ENCODE measurements at regions of chr15 and their contacts with region 1.

Region 1: GRCh38 chr15:62847900-62848489 is 194.6 kb upstream of the TPM1 start:
- DNase-seq: peak in 4 of 5 donors; percentile 2 to 20 (median 10)
- H3K4me3 ChIP-seq: no peak overlapping the region
- H3K4me3 Mint-ChIP-seq: no peak overlapping the region
- H3K27ac ChIP-seq: no peak overlapping the region
- H3K27ac Mint-ChIP-seq: no peak overlapping the region
- H3K4me1 ChIP-seq: no peaks in the 10 kb centered on the region
- H3K4me1 Mint-ChIP-seq: no peaks in the 10 kb centered on the region
- H3K27me3 ChIP-seq: no peaks in the 10 kb centered on the region
- H3K27me3 Mint-ChIP-seq: peaks cover 12 to 15% of the 10 kb centered on the region in 2 donors

Region 2: DNA sequence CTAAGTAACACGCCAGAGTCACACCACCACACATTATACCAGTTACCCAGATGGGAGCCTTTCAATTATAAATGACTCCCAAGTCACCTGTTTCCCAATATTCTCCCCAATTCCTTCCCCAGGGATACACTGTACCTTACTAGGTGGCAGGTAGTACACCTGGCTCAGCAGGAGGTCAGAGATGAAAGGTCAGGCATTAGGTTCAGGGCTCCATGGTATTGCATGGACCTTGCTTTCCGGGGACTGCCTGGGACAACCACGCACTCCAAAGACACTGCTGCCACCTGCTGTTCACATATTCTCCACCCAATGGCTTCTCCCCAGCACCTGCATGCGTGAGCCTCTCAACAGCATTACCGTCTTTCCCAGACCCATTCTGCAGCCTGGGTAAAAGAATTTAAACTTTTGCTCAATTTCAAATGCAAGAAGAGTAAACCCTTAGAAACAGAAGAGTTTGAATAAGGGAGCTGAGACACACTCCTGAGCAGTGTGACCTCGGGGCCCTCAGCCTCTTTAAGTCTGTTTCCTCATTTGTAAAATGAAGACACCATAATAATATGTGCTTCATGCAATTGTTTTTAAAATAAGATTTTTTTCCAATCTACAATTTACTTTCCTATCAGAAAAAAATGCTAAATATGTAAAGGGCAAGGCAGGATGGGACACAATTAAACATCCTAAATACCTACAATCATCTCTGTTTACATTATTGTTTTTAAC is 245.7 kb after region 1 on chr15:
- CTCF ChIA-PET with region 1: interaction called, 4 read pairs
- POLR2A ChIA-PET with region 1: no interaction called
- intact Hi-C with region 1: loop called (anchors 1 kb)
- DNase-seq: peak; percentile 57 to 62 (median 57)
- H3K4me3 ChIP-seq: no peak overlapping the region
- H3K4me3 Mint-ChIP-seq: no peak overlapping the region
- H3K27ac ChIP-seq: no peak overlapping the region
- H3K27ac Mint-ChIP-seq: no peak overlapping the region
- H3K4me1 ChIP-seq: no peaks in the 10 kb centered on the region
- H3K4me1 Mint-ChIP-seq: peaks cover 0 to 2% (median 0%) of the 10 kb centered on the region in 4 donors
- H3K27me3 ChIP-seq: no peaks in the 10 kb centered on the region
- H3K27me3 Mint-ChIP-seq: peaks cover 0 to 2% of the 10 kb centered on the region in 2 donors